ENCODE measurements at regions of chr11 and their contacts with region 1.

Region 1: GRCh38 chr11:83836883-83837654 is 550.9 kb upstream of the CCDC90B start:
- DNase-seq: peak; percentile 60
- CTCF ChIP-seq: peak; percentile 68

Region 2: GRCh38 chr11:84261707-84262106 is 424.6 kb after region 1 on chr11:
- in situ Hi-C with region 1: loop called (anchors 25 kb)
- DNase-seq: peak; percentile 7
- CTCF ChIP-seq: peak; percentile 47

Region 3: GRCh38 chr11:84430661-84431060 is 593.6 kb after region 1 on chr11:
- in situ Hi-C with region 1: no loop called
- DNase-seq: no peak
- CTCF ChIP-seq: no peak

Region 4: DNA sequence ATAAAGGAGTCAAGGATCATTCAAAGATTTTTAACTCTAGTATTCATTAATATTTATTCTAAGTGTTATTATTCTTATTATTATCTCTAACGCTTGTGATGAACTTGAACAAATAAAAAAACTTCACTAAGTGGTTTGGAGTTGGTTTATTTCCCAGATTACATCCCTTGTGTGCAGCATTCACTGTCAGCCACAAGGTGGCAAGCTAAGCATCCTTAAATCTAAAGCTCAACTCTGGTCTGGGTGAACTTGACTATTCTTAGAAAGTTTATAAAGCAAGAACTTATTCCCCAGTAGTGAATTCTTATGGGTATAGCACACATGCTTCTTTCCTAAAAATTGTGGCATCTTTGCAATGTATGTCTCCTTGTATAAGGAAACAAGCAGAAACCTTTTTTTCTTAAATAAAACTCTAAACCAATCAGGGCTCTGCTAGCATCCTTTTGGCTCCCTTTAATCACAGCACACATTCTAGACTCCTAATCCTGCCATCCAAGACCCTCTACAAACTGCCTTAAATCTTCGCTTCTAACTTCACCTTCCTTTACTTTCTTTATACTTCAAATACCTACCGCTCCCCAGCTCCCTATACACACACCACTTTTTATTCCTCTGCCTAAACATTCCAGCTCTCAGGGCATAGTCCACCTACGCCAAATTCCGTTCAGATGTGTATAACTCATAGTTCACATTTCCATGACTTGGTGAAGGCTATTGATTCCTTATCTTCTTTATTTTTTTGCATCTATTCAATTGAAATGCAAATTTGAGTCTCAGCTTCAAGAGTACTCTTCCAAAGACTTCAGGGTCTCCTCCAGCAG is 721.2 kb after region 1 on chr11:
- in situ Hi-C with region 1: loop called (anchors 25 kb)
- DNase-seq: peak; percentile 10
- CTCF ChIP-seq: peak; percentile 87